Heart right ventricle (tissue), 16 donors: ENCODE measurements at regions of chr17 and their contacts with region 1.

Region 1: GRCh38 chr17:80454557-80455335 is 21.7 kb downstream of the NPTX1 start:
- DNase-seq: peak; percentile 97 to 98
- ATAC-seq: peak; percentile 95 to 97 (median 96)
- H3K4me3 ChIP-seq: peak overlapping the region; percentile 55 to 92 (median 70)
- H3K27ac ChIP-seq: peak overlapping the region; percentile 83 to 99 (median 97)
- H3K4me1 ChIP-seq: peaks cover 8 to 39% (median 30%) of the 10 kb centered on the region in 9 donors
- H3K27me3 ChIP-seq: no peaks in the 10 kb centered on the region
- CTCF ChIP-seq: peak in 1 of 9 donors; percentile 11

Region 2: DNA sequence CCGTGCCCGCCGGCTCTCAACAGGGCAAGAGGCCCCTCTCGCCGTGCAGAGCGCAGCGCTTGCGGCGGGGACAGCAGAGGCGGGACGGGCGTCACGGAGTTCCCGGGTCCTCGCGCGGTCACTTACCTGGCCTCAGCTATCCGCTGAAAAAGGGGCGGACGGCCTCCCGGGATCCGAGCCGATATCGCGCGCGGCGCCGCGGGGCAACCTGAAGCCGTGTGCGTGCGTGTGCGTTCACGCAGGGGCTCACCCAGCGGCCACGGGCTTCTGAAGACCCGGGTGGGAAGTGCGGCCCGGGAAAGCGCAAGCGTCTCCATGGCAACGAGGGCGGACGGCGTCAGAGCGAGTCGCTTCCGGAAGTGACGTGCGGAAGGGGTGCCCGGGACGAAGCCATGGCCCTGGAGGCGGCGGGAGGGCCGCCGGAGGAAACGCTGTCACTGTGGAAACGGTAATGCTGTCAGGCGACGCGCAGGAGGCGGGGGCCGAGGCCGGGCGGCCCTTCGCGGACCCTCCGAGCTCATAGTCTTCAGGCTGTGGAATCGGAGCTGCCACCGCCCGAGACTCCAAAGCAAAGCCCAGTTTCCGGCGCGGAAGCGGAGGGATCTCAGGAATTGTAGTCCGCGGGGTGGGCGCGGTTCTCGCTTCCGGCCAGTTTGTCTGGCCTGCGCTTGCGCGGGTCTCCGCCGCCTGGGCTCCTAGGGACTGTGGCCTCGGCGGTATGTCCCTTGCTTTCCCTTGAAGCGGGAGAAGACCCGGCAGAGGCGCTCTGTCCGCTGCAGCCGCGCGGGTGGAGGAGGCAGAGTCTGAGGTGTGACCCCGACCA is 39.7 kb before region 1 on chr17 and contains the start of gene ENDOV:
- intact Hi-C with region 1: loop called in 1 of 10 experiments (anchors 2 kb)
- DNase-seq: peak; percentile 94 to 97
- ATAC-seq: peak; percentile 96 to 99 (median 98)
- H3K4me3 ChIP-seq: peak within 1 kb of the TSS; percentile 41 to 97 (median 87)
- H3K27ac ChIP-seq: peak within 1 kb of the TSS; percentile 64 to 99 (median 96)
- H3K4me1 ChIP-seq: peaks cover 6 to 33% (median 26%) of the 10 kb centered on the region in 9 donors
- H3K27me3 ChIP-seq: peaks cover 0 to 18% (median 0%) of the 10 kb centered on the region in 7 donors
- CTCF ChIP-seq: no peak
- total RNA-seq, gene ENDOV: 9.0 to 19.9 (median 13.5) TPM

Region 3: DNA sequence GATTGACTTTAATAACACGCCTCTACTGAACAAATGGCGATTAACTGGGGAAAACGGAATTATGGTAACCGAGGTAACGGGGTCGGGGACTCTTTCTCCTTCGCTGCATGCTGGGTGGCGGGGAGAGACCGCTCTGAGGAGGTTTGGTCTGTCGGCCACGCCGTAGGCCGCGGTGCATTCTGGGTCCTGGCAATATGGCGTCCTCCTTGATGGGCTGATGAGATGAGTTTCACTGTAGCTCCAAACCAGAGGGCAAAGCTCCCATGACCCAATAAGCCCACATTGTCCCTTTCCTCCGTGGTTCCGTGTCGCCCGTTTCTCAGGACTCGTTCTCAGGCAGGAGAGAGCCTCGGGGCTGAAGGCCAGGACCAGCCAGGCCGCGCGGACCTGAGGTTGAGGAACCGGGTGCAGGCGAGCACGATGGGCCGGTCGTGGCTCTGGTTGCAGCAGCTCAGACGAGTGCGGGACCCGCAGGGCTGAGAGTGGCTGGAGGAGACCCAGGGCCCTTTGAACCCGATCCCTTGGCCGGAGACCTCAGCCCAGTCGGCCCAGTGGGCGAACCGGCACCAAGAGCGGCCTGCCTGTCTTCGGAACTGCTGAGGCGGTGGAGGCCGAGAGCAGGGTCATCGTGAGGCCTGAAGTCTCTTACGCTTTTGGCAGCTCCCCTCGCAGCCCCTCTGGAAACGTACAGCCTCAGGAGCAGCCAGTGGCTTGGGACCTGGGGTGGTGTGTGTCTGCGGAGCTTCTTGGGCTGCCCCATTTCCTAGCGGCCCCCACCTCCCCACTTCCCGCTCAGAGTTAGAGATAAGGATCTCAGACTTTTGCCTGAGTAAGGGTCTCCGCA is 90.1 kb after region 1 on chr17 and contains the start of gene RPTOR:
- intact Hi-C with region 1: loop called in 2 of 10 experiments (anchors 10 kb)
- DNase-seq: peak; percentile 89 to 92
- ATAC-seq: peak; percentile 97 to 100 (median 99)
- H3K4me3 ChIP-seq: peak within 1 kb of the TSS; percentile 83 to 99 (median 95)
- H3K27ac ChIP-seq: peak within 1 kb of the TSS; percentile 12 to 90 (median 80)
- H3K4me1 ChIP-seq: peaks cover 3 to 34% (median 27%) of the 10 kb centered on the region in 9 donors
- H3K27me3 ChIP-seq: peaks cover 0 to 27% (median 7%) of the 10 kb centered on the region in 7 donors
- CTCF ChIP-seq: no peak
- total RNA-seq, gene RPTOR: 21.6 to 30.3 (median 26.4) TPM